Gastrocnemius medialis (tissue), 4 donors: ENCODE measurements at regions of chr11 and their contacts with region 1.

Region 1: DNA sequence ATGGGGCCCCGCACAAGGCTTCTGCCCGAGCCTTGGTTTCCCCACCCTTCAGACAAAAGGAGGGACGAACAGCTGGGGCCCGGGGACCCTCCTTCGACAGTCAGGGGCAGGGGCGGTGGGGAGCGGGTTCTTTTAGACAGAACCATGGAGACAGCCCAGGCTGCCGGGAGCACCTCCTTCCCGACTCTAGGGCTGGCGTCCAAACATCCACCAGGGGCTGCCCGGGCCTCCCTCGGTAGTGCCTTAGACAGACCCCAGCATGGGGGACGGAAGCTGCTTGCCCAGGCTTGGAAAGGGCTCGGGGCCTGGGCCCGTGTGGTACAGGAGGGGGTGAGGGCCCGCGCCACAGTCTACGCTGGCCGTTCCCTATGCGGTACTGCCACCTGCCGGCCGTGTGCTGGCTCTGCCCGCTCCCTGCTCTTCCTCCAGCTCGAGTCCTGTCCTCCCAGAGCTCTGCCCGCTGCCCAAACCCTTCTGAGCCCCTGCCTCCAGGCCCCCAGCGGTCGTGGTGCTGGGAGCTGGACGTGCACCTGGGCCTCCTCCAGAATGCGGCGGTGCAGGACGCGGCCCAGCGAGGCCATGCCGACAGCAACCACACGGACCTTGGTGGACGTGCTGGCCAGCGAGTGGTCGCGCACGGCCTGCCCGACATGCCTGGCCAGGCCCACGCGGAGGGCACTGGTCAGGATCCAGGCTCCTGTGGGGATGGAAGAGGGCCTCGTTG is 20.1 kb downstream of the TSSC4 start:
- DNase-seq: peak; percentile 29 to 45
- ATAC-seq: peak; percentile 78 to 93
- H3K4me3 ChIP-seq: peak overlapping the region in 1 of 4 donors; percentile 41
- H3K27ac ChIP-seq: no peak overlapping the region
- H3K4me1 ChIP-seq: no peaks in the 10 kb centered on the region
- H3K27me3 ChIP-seq: no peaks in the 10 kb centered on the region
- CTCF ChIP-seq: peak; percentile 87 to 97 (median 94)
- POLR2A ChIP-seq: no peak

Region 2: DNA sequence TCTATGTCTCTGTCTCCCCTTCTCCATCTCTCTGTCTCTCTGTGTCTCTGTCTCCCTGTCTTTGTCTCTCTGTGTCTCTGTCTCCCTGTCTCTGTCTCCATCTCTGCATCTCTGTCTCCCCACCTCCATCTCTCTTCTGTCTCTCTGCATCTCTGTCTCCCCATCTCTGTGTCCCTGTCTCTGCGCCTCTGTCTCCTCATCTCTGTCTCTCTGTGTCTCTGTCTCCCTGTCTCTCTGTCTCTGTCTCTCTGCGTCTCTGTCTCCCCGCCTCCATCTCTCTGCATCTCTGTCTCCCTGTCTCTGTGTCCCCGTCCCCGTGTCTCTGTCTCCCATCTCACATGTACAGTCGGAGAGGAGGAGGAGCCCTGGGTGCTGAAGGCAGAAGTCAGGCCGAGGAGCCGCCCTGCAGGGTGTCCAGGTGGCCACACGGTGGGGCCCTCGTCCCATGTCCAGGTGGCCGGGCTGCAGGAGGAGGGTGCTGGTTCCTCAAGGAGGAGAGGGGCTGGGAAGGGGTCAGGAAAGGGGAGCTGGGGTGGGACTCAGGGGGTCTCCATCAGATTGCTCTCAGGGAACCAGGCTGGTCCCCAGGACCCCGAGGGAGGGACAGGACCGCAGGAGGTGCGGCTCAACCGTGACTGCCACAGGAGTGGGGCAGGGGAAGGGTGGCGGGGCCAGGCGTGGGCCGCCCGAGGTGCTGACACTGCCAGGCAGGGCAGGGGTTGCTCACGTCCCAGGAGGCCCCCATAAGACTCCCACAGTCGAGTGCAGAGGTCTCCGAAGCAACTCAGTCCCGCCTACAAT is 223.5 kb before region 1 on chr11:
- in situ Hi-C with region 1: loop called (anchors 10 to 25 kb)
- intact Hi-C with region 1: loop called (anchors 1 kb)
- DNase-seq: peak; percentile 13 to 24
- ATAC-seq: no peak
- H3K4me3 ChIP-seq: no peak overlapping the region
- H3K27ac ChIP-seq: no peak overlapping the region
- H3K4me1 ChIP-seq: no peaks in the 10 kb centered on the region
- H3K27me3 ChIP-seq: peaks cover 0 to 17% (median 14%) of the 10 kb centered on the region in 3 donors
- CTCF ChIP-seq: peak; percentile 29 to 70 (median 66)
- POLR2A ChIP-seq: no peak

Region 3: DNA sequence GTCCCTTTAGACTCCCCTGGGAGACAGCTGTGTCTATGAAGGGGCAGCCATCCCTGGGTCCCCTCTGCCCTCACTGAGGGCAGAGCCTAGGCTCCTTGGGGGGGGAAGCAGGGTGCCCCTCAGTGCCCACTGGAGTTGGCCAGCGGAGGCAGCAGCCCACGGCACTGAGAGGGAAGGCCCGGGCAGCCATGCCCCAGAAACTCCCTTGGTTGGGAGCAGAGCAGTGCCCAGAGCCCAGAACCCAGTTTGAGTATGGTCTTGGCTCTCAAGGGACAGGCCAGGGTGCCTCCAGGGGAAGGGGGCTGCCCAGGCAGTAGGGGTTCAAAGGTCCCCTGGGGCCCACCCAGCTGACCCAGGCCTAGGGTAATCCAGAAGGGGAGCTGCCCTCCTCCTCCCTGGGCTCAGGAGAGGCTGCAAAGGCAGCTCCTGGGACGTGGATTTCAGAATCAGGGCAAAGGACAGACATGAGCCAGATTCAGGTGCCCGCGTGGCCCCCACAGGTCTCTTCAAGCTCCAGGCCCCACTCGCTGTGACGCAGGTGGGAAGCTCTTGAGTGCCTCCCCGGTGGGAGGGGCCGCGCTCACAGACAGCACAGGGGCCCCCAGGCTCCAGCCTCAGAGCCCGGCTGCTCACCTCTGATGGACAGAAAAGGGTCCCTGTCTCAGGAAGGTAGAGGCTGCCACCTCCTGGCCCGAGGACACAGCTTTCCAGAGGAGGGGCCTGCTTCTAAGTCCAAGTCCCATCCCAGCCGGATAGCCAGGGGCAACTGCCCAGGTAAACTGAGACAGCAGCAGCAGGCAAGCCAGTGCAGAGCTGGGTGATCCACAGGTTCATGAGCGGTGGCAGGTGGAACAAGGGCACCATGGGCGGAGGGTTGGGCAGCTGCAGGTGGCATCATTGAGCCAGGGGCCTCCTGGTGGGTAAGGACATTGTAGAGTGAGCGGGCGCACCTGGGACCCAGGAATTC is 121.6 kb before region 1 on chr11:
- in situ Hi-C with region 1: loop called in 3 of 4 experiments (anchors 5 to 10 kb)
- intact Hi-C with region 1: no loop called
- DNase-seq: no peak
- ATAC-seq: no peak
- H3K4me3 ChIP-seq: no peak overlapping the region
- H3K27ac ChIP-seq: no peak overlapping the region
- H3K4me1 ChIP-seq: no peaks in the 10 kb centered on the region
- H3K27me3 ChIP-seq: peaks cover 0 to 4% (median 0%) of the 10 kb centered on the region in 3 donors
- CTCF ChIP-seq: peak in 1 of 5 experiments; percentile 21
- POLR2A ChIP-seq: no peak

Region 4: GRCh38 chr11:2305140-2305840 is 115.4 kb before region 1 on chr11:
- in situ Hi-C with region 1: loop called in 1 of 4 experiments (anchors 10 kb)
- intact Hi-C with region 1: loop called (anchors 1 kb)
- DNase-seq: peak; percentile 59 to 64
- ATAC-seq: peak; percentile 68 to 86
- H3K4me3 ChIP-seq: no peak overlapping the region
- H3K27ac ChIP-seq: no peak overlapping the region
- H3K4me1 ChIP-seq: peaks cover 0 to 7% of the 10 kb centered on the region in 2 donors
- H3K27me3 ChIP-seq: no peaks in the 10 kb centered on the region
- CTCF ChIP-seq: peak; percentile 70 to 94 (median 93)
- POLR2A ChIP-seq: no peak

Region 5: GRCh38 chr11:2314525-2315394 is 105.9 kb before region 1 on chr11:
- in situ Hi-C with region 1: loop called in 2 of 4 experiments (anchors 5 to 10 kb)
- intact Hi-C with region 1: no loop called
- DNase-seq: peak in 1 of 2 donors; percentile 50
- ATAC-seq: peak; percentile 51 to 61
- H3K4me3 ChIP-seq: no peak overlapping the region
- H3K27ac ChIP-seq: peak overlapping the region; percentile 12 to 57 (median 47)
- H3K4me1 ChIP-seq: peaks cover 8 to 13% of the 10 kb centered on the region in 2 donors
- H3K27me3 ChIP-seq: no peaks in the 10 kb centered on the region
- CTCF ChIP-seq: no peak
- POLR2A ChIP-seq: no peak

Region 6: GRCh38 chr11:2377511-2378443 is 42.9 kb before region 1 on chr11:
- in situ Hi-C with region 1: no loop called
- intact Hi-C with region 1: loop called (anchors 5 kb)
- DNase-seq: no peak
- ATAC-seq: peak; percentile 49 to 73
- H3K4me3 ChIP-seq: peak overlapping the region; percentile 73 to 98 (median 92)
- H3K27ac ChIP-seq: peak overlapping the region; percentile 89 to 95 (median 91)
- H3K4me1 ChIP-seq: peaks cover 39 to 46% of the 10 kb centered on the region in 2 donors
- H3K27me3 ChIP-seq: no peaks in the 10 kb centered on the region
- CTCF ChIP-seq: no peak
- POLR2A ChIP-seq: peak in 1 of 2 donors; percentile 34

Region 7: DNA sequence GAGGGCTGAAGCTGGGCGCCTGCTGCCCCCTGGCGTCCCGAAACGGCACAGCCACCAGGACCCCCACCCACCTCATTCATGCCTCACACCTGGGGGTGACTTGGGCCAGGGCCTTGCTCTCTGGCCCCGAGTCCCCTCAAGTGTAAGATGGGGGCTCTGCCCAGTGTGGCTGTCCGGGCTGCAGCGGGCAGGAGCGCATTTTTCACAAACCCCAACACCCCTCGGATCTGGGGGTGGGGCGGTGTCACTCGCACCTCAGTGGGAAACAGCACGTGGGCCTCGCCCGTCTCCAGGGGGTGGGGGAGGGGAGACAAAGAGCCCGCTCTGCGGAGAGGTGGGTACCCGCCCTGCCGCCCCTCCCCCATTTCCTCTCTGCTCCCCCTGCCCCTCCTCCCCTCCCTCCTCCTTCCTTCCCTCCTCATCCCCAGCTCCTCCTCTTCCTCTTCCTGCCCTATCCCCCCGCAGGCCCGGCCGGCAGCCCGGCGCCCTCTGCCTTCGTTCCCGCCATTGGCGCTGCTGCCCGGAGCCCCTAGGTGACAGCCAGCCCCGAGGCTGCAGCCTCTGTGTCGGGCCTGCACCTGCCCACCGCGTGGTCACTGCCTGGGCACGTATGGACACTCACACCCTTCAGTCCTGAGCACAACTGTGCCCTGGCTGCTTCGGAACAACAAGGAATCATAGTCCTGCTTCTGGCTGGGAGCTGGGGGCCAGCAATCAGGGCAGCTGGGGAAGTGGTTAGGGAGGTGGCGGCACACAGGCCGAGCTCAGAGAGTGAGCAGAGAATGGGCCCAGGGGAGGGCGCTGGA is 471.8 kb after region 1 on chr11:
- in situ Hi-C with region 1: loop called in 2 of 4 experiments (anchors 10 to 25 kb)
- intact Hi-C with region 1: no loop called
- DNase-seq: no peak
- ATAC-seq: peak in 1 of 2 donors; percentile 25
- H3K4me3 ChIP-seq: peak overlapping the region; percentile 32 to 47 (median 36)
- H3K27ac ChIP-seq: peak overlapping the region in 3 of 4 donors; percentile 23 to 31 (median 29)
- H3K4me1 ChIP-seq: peaks cover 5 to 12% of the 10 kb centered on the region in 2 donors
- H3K27me3 ChIP-seq: no peaks in the 10 kb centered on the region
- CTCF ChIP-seq: peak; percentile 80 to 93 (median 92)
- POLR2A ChIP-seq: no peak